Activated B cell treated with CpG ODN at 0.5 μM for 24 hours (primary cell): ENCODE measurements at regions of chr3 and their contacts with region 1.

Region 1: DNA sequence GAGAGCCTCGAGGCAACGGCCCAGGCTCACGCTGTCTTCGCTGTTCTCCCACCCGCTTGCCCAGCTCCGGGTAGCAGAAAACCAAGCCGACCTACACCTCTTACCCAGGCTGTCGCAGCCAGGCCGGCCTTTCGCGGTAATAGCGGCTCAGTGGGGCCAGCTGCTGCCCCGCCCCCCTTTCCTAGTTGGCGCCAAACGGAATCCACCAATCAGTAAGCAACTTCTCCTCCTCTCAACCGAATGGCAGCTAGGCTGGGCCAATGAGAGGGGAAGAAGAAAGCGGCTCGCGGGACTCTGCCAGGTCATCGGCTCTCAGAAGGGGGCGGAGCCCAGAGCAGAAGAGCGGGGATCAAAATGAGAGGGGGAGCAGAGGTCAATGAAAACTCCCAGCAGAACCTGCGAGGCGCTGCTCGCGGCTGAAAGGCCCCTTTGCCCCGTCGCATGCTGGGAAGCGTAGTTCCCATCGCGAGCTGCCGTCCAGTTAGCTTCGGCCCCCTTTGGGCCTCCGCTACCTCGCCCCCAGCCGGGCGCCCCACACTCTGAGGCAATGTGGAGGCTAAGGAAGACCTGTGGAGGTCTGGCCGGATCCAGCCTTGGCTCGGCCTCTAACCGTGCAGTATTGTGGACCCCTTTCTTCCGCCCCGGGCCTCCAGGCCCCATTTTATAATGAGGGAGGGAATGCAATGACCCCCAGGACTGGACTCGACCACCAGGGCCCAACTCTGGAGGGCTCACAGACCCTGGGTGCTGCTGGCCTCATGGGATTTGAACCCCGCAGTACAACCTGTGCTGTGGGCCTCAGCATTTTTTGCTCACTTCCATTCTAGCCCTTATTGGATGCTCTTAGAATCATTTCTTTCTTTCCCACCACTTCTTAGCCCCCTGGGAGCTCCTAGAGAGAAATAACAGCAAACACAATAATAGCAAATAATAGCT is at the start of gene CDC25A:
- DNase-seq: peak; percentile 79
- ATAC-seq: peak; percentile 99
- H3K4me3 Mint-ChIP-seq: peak within 1 kb of the TSS; percentile 88
- H3K27ac Mint-ChIP-seq: peak within 1 kb of the TSS; percentile 80
- H3K4me1 Mint-ChIP-seq: peaks cover 13% of the 10 kb centered on the region
- H3K27me3 Mint-ChIP-seq: peaks cover 9% of the 10 kb centered on the region
- CTCF ChIP-seq: no peak
- total RNA-seq, gene CDC25A: 1.7 and 1.8 TPM in 2 replicates

Region 2: GRCh38 chr3:49165771-49166751 is 977.5 kb after region 1 on chr3 and contains the start of gene CCDC71:
- CTCF ChIA-PET with region 1: no interaction called
- POLR2A ChIA-PET with region 1: no interaction called
- intact Hi-C with region 1: loop called (anchors 5 kb)
- DNase-seq: peak; percentile 74
- ATAC-seq: peak; percentile 83
- H3K4me3 Mint-ChIP-seq: peak within 1 kb of the TSS; percentile 92
- H3K27ac Mint-ChIP-seq: peak within 1 kb of the TSS; percentile 84
- H3K4me1 Mint-ChIP-seq: peaks cover 26% of the 10 kb centered on the region
- H3K27me3 Mint-ChIP-seq: peaks cover 2% of the 10 kb centered on the region
- CTCF ChIP-seq: no peak
- total RNA-seq, gene CCDC71: 28.3 and 28.9 TPM in 2 replicates